ENCODE measurements at regions of chr9 and their contacts with region 1.

Region 1: GRCh38 chr9:116737152-116737546 is 50.0 kb downstream of the TRIM32 start:
- DNase-seq: peak; percentile 97
- ATAC-seq: peak; percentile 87
- H3K4me3 Mint-ChIP-seq: no peak overlapping the region
- H3K27ac Mint-ChIP-seq: no peak overlapping the region
- H3K4me1 Mint-ChIP-seq: peaks cover 29% of the 10 kb centered on the region
- H3K27me3 Mint-ChIP-seq: no peaks in the 10 kb centered on the region
- CTCF ChIP-seq: peak; percentile 91

Region 2: DNA sequence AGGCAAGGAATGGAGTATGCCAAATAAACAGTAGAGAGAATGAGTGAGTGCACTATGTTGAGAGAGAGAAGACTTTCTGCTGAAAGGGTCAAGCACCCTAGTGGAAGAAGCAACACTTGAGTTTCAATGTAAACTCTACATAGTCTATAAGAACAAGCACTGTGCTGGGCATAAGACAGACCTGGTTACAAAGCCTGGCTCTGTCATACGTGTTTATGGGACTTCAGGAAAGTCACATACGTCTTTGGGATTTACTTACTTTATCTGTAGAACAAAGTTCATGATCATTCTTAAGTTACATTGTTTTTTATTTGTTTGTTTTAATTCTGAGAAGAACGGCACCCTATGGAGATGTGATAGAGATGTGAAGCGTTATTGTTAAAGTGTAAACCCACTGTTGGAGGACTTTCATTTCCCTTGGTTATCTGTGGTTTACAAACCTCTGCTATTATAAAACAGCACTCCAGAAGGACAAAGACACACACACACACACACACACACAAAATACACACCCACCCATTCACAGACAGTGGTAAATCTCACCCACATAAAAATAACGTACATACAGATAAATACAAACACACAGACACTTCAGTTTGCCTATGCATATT is 120.7 kb before region 1 on chr9:
- CTCF ChIA-PET with region 1: no interaction called
- POLR2A ChIA-PET with region 1: no interaction called
- DNase-seq: no peak
- ATAC-seq: no peak
- H3K4me3 Mint-ChIP-seq: no peak overlapping the region
- H3K27ac Mint-ChIP-seq: no peak overlapping the region
- H3K4me1 Mint-ChIP-seq: no peaks in the 10 kb centered on the region
- H3K27me3 Mint-ChIP-seq: no peaks in the 10 kb centered on the region
- CTCF ChIP-seq: no peak

Region 3: DNA sequence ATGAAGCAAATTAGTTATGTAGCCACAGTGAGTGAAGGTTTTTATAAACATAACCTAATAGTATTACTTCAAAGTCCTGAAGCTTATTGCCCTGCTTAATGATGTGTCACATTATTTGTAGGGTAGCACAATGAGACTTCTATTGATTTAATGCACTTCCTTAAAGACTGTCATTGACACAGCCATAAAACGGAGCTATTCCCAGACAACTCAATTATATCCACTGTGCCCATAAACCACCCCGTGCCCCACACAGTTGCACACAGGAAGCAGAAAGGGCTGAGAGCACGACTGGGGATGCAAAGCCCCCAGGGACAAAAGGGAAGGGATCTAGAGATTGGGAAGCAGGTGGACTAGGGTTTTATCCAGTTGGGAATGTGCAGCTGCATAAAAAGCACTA is 13.0 kb before region 1 on chr9:
- CTCF ChIA-PET with region 1: interaction called, 26 read pairs
- POLR2A ChIA-PET with region 1: no interaction called
- DNase-seq: no peak
- ATAC-seq: no peak
- H3K4me3 Mint-ChIP-seq: no peak overlapping the region
- H3K27ac Mint-ChIP-seq: no peak overlapping the region
- H3K4me1 Mint-ChIP-seq: peaks cover 26% of the 10 kb centered on the region
- H3K27me3 Mint-ChIP-seq: no peaks in the 10 kb centered on the region
- CTCF ChIP-seq: no peak

Region 4: GRCh38 chr9:116749176-116749575 is 12.0 kb after region 1 on chr9:
- CTCF ChIA-PET with region 1: interaction called, 11 read pairs
- POLR2A ChIA-PET with region 1: no interaction called
- DNase-seq: no peak
- ATAC-seq: no peak
- H3K4me3 Mint-ChIP-seq: no peak overlapping the region
- H3K27ac Mint-ChIP-seq: no peak overlapping the region
- H3K4me1 Mint-ChIP-seq: peaks cover 18% of the 10 kb centered on the region
- H3K27me3 Mint-ChIP-seq: no peaks in the 10 kb centered on the region; the same call in 1 of the 2 replicates
- CTCF ChIP-seq: no peak